ENCODE measurements at regions of chr11 and their contacts with region 1.

Region 1: DNA sequence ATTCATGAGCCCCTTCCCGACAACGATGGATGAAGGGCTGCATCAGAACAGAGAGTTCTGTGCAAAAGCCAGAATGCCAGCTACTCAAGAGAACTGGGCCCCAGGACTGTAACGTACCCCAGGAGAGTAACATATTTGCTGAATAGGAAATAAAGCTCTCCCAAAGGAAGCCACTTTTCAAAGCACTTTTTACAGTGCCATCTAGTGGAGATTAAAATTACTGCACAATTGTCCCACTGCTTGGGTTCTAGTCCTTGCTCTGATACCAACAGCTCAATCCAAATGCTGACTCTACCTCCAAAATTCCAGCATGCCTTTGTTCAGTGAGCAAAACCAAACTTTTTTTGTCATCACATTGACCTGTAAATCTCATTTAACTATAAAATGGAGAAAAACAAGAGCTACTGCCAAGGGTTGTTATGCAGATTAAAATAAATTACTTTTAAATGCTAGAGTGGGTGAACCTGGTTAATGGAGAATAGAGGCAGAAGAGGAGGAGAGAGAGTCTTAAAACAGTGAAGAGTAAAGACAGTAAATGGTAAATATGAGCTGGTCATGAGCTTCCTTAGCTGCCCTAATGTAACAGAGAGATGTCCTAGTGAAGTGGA is 87.6 kb upstream of the FSHB start:
- DNase-seq: peak; percentile 27 to 43 (median 34)
- ATAC-seq: peak; percentile 62; the same call in 2 of the 3 replicates
- H3K4me3 ChIP-seq: no peak overlapping the region
- H3K27ac ChIP-seq: no peak overlapping the region
- H3K4me1 ChIP-seq: no peaks in the 10 kb centered on the region
- H3K27me3 ChIP-seq: no peaks in the 10 kb centered on the region
- CTCF ChIP-seq: peak in 2 of 3 experiments; percentile 55 to 57; a peak in 4 of 6 replicates
- EP300 ChIP-seq: no peak
- POLR2A ChIP-seq: no peak
- RAD21 ChIP-seq: peak in 1 of 2 experiments; percentile 51; a peak in 2 of 4 replicates

Region 2: GRCh38 chr11:30322826-30323710 is 179.9 kb after region 1 on chr11 and contains the start of gene ARL14EP:
- CTCF ChIA-PET with region 1: no interaction called
- POLR2A ChIA-PET with region 1: no interaction called
- in situ Hi-C with region 1: no loop called
- intact Hi-C with region 1: loop called (anchors 10 kb)
- DNase-seq: peak; percentile 79 to 97 (median 86)
- ATAC-seq: peak; percentile 96
- H3K4me3 ChIP-seq: peak within 1 kb of the TSS; percentile 73
- H3K27ac ChIP-seq: peak within 1 kb of the TSS; percentile 91
- H3K4me1 ChIP-seq: peaks cover 5 to 9% of the 10 kb centered on the region in 2 experiments; a peak in 4 of 5 replicates
- H3K27me3 ChIP-seq: no peaks in the 10 kb centered on the region
- CTCF ChIP-seq: no peak
- EP300 ChIP-seq: peak; percentile 42
- POLR2A ChIP-seq: peak; percentile 98
- RAD21 ChIP-seq: no peak
- polyA plus RNA-seq, gene ARL14EP: 37.8 to 42.7 TPM

Measured in K562 (cell line).